ENCODE measurements at regions of chr7 and their contacts with region 1.

Region 1: GRCh38 chr7:46932676-46933424 is 649.1 kb downstream of the TNS3 start:
- DNase-seq: peak; percentile 52
- ATAC-seq: no peak
- H3K4me3 ChIP-seq: no peak overlapping the region
- H3K27ac ChIP-seq: no peak overlapping the region
- H3K4me1 ChIP-seq: peaks cover 18% of the 10 kb centered on the region
- H3K27me3 ChIP-seq: no peaks in the 10 kb centered on the region
- CTCF ChIP-seq: peak; percentile 34; the same call in 1 of the 2 replicates

Region 2: GRCh38 chr7:46486256-46487206 is 446.3 kb before region 1 on chr7:
- CTCF ChIA-PET with region 1: no interaction called
- POLR2A ChIA-PET with region 1: no interaction called
- intact Hi-C with region 1: loop called (anchors 5 kb)
- DNase-seq: peak; percentile 80
- ATAC-seq: peak; percentile 82
- H3K4me3 ChIP-seq: peak overlapping the region; percentile 7; the same call in 1 of the 2 replicates
- H3K27ac ChIP-seq: peak overlapping the region; percentile 88
- H3K4me1 ChIP-seq: peaks cover 39% of the 10 kb centered on the region
- H3K27me3 ChIP-seq: no peaks in the 10 kb centered on the region
- CTCF ChIP-seq: no peak

Region 3: DNA sequence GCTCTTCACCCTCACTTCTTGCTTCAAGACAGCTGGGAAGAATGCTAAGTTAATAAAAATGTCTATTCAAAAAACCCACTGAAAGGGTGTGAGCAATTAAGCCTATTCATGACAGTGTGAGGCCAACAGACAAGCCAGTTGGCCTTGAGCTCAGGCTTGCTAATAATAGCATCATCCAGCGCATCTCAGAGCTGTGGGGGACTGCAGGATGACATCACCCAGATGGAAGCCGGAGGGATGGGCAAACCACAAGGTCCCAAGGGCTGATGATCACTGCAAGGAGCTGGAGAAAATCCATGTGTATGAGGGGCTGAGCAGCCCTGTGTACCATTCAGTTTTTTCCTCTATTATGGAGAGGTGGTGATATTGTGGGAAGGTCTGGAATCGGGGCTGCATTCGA is 121.3 kb before region 1 on chr7:
- CTCF ChIA-PET with region 1: no interaction called
- POLR2A ChIA-PET with region 1: no interaction called
- intact Hi-C with region 1: loop called (anchors 1 kb)
- DNase-seq: peak; percentile 59
- ATAC-seq: peak; percentile 82
- H3K4me3 ChIP-seq: no peak overlapping the region
- H3K27ac ChIP-seq: peak overlapping the region; percentile 33
- H3K4me1 ChIP-seq: peaks cover 22% of the 10 kb centered on the region
- H3K27me3 ChIP-seq: no peaks in the 10 kb centered on the region
- CTCF ChIP-seq: no peak